ENCODE measurements at regions of chr13 and their contacts with region 1.

Region 1: DNA sequence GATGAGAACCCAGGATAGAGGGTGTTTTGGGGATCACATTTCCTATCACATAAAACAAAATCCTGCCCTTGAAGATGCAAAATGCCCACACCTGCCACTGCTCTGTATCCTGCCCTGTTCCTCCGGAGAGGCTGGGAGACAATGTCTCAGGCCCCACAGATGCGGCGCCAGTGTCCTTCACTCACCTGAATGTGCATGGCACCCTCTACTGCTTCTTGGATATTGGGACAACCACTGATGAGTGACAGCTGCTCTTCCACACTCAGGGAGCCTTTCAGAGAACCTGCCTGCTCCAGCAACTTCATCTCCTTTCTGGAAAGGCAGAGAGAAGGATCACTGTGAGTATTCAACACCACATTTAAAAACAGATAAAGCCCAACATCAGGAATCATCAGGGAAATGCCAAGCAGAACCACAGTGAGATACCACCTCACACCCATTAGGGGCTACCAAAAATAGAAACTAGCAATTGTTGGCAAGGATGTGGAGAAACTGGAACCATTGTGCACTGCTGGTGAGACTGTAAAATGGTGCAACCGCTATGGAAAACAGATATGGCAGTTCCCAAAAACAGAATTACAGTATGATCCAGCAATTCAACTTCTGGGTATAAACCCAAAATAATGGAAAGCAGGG is 36.4 kb downstream of the CRYL1 start:
- DNase-seq: peak in 1 of 3 donors; percentile 41
- H3K4me3 ChIP-seq: no peak overlapping the region
- H3K27ac ChIP-seq: no peak overlapping the region
- H3K4me1 ChIP-seq: peaks cover 0 to 13% (median 9%) of the 10 kb centered on the region in 4 experiments
- H3K27me3 ChIP-seq: no peaks in the 10 kb centered on the region

Region 2: GRCh38 chr13:20197361-20197834 is 291.9 kb before region 1 on chr13:
- CTCF ChIA-PET with region 1: interaction called, 10 read pairs
- POLR2A ChIA-PET with region 1: no interaction called
- DNase-seq: peak; percentile 59 to 65 (median 62)
- H3K4me3 ChIP-seq: no peak overlapping the region
- H3K27ac ChIP-seq: no peak overlapping the region
- H3K4me1 ChIP-seq: peaks cover 0 to 22% (median 19%) of the 10 kb centered on the region in 4 experiments
- H3K27me3 ChIP-seq: peaks cover 20 to 48% (median 24%) of the 10 kb centered on the region in 5 experiments

Region 3: DNA sequence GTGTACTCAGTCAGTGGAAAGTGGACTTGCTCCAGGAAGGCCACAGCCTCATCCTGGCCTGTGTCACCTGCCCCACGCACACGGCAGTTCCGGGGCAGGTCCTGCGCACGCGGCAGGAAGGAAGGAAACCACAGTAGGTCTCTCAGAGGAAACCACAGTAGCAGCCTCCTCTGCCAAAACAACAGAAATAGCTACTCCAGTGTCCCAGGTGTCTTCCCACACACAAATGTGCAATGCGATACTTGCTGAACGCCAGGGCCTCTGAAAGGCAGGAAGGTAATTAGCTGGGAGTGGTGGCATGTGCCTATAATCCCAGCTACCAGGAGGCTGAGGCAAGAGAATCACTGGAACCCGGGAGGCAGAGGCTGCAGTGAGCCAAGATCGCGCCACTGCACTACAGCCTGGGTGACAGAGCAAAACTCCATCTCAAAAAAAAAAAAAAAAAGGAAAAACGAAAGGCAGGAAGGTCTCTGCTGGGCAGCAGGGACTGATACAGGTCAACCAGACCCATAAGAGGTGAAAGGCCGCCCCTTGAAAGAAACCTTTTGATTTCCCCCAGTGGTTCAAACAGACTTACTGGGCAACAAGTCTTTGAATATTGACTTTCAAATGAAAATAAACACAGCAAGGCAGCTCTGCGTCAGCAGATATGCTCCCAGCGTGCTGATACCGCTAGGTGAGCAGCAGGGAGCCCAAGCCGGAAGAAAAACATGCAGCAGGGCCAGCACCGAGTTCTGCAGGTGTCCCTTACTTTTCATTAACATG is 13.2 kb before region 1 on chr13:
- CTCF ChIA-PET with region 1: interaction called, 26 read pairs
- POLR2A ChIA-PET with region 1: no interaction called
- DNase-seq: peak; percentile 78 to 90 (median 88)
- H3K4me3 ChIP-seq: peak overlapping the region in 2 of 7 experiments; percentile 13 to 14
- H3K27ac ChIP-seq: no peak overlapping the region
- H3K4me1 ChIP-seq: peaks cover 2 to 19% (median 16%) of the 10 kb centered on the region in 4 experiments
- H3K27me3 ChIP-seq: no peaks in the 10 kb centered on the region